ENCODE measurements at regions of chr1 and their contacts with region 1.

Region 1: GRCh38 chr1:107739228-107739627 is 225.8 kb downstream of the VAV3 start:
- DNase-seq: no peak
- ATAC-seq: peak; percentile 89
- H3K4me3 Mint-ChIP-seq: peak overlapping the region; percentile 62
- H3K27ac Mint-ChIP-seq: peak overlapping the region; percentile 91
- H3K4me1 Mint-ChIP-seq: peaks cover 52% of the 10 kb centered on the region
- H3K27me3 Mint-ChIP-seq: no peaks in the 10 kb centered on the region
- CTCF ChIP-seq: no peak

Region 2: GRCh38 chr1:107450899-107451664 is 288.1 kb before region 1 on chr1:
- CTCF ChIA-PET with region 1: no interaction called
- POLR2A ChIA-PET with region 1: no interaction called
- intact Hi-C with region 1: loop called (anchors 5 kb)
- DNase-seq: no peak
- ATAC-seq: peak; percentile 74
- H3K4me3 Mint-ChIP-seq: peak overlapping the region; percentile 75
- H3K27ac Mint-ChIP-seq: peak overlapping the region; percentile 97
- H3K4me1 Mint-ChIP-seq: peaks cover 87% of the 10 kb centered on the region
- H3K27me3 Mint-ChIP-seq: no peaks in the 10 kb centered on the region
- CTCF ChIP-seq: no peak

Region 3: GRCh38 chr1:107692580-107693345 is 46.5 kb before region 1 on chr1:
- CTCF ChIA-PET with region 1: no interaction called
- POLR2A ChIA-PET with region 1: no interaction called
- intact Hi-C with region 1: no loop called
- DNase-seq: no peak
- ATAC-seq: no peak
- H3K4me3 Mint-ChIP-seq: no peak overlapping the region
- H3K27ac Mint-ChIP-seq: no peak overlapping the region
- H3K4me1 Mint-ChIP-seq: no peaks in the 10 kb centered on the region
- H3K27me3 Mint-ChIP-seq: no peaks in the 10 kb centered on the region
- CTCF ChIP-seq: no peak